ENCODE measurements at regions of chr5 and their contacts with region 1.

Region 1: DNA sequence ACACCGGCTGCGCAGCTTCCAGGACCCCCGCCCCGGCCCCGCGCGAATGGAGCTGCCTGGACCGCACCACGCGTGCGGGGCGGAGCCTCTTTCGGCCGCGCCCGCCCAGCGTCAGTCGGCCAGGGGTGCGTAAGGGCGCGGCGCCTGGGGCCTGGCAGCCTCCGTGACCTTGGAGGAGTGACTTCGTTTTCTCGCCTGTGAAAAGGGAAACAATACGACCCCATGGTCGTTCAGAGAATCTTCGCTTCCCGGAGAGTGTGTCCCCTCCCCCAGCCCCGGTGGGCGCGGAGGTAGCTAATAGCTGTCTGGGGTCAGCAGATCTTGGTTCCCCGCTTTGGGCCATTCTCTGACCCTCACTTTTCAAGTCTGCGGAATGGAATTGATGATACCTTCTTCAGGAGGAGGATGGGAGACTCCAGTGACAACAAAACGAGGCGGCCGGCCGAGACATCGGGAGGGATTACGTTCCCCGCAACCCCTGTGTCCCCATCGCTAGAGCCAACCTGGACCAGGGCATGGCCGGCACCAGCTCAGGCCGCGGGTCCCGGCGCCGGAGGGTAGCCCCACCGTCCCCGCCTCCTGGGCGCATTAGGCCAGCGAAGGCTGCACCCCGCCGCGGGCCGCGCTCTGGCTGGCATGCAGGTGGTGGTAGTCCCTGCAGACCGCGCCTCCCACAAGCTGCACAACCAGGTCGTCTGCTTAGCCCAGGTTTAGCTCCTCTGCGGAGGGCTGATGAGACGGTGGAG is 5.5 kb upstream of the CDHR2 start:
- DNase-seq: peak; percentile 86
- H3K4me3 Mint-ChIP-seq: peak overlapping the region; percentile 93
- H3K27ac Mint-ChIP-seq: peak overlapping the region; percentile 97
- H3K4me1 Mint-ChIP-seq: peaks cover 65% of the 10 kb centered on the region
- H3K27me3 Mint-ChIP-seq: no peaks in the 10 kb centered on the region

Region 2: GRCh38 chr5:176530983-176531821 is 12.4 kb before region 1 on chr5:
- CTCF ChIA-PET with region 1: interaction called, 21 read pairs
- DNase-seq: peak; percentile 45
- H3K4me3 Mint-ChIP-seq: peak overlapping the region; percentile 82
- H3K27ac Mint-ChIP-seq: peak overlapping the region; percentile 88
- H3K4me1 Mint-ChIP-seq: peaks cover 65% of the 10 kb centered on the region
- H3K27me3 Mint-ChIP-seq: no peaks in the 10 kb centered on the region

Region 3: DNA sequence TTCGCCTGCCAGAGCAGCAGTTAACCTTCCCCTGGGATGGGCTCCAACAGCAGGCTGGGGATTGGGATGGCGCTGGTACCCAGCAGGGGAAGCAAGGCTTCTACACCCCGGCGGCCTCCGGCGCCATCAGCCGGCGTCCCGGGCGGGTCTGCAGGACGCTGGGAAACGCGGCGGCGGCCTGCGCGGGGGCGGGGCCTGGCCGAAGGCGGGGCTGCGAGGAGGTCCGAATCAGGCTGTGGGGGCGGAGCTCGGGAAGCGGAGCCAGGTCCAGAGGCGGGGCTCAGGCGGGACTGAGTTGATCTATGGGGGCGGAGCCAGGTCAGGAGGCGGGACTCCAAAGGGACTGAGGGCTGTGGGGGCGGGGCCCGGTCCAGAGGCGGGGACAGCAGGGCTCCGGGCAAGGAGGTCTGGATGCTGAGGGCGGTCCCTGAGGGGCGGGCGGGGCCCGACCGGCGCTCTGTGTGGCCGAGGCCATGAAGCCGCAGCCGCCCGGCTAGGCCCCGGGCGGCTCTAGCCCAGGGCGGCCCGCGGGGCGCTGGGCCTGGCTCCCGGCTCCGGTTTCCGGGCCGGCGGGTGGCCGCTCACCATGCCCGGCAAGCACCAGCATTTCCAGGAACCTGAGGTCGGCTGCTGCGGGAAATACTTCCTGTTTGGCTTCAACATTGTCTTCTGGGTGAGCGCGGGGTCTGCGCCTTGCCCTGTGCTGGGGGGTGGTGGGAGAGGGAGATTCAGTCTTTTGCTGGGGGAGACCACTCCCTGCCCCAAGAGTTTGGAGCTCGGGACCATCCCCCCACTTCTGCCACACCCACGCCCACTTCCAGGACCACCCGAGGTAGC is 103.6 kb after region 1 on chr5 and contains the start of gene TSPAN17:
- CTCF ChIA-PET with region 1: no interaction called
- DNase-seq: peak; percentile 100
- H3K4me3 Mint-ChIP-seq: peak within 1 kb of the TSS; percentile 88
- H3K27ac Mint-ChIP-seq: peak within 1 kb of the TSS; percentile 90
- H3K4me1 Mint-ChIP-seq: peaks cover 54% of the 10 kb centered on the region
- H3K27me3 Mint-ChIP-seq: peaks cover 10% of the 10 kb centered on the region